ENCODE measurements at regions of chr17 and their contacts with region 1.

Region 1: DNA sequence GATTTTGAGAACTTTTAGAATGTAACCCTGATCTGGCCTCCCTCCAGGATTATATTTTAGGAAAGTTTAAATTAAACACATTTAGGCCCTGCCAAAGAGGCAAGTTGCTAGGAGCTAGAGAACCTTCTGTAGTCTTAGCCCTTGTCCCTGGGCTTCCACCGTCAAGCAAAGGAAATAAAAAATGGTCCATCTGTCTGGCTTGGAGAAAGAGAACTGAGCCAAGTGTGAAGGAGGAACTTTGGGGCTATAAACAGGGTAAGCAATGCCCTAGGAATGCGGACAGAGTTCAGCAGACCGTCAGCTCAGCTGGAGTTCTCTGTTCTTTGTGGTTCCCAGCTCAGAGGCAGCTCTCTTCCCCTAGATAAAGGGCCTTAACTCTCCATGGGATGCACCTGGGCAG is 29.6 kb downstream of the RCVRN start:
- DNase-seq: no peak
- H3K4me3 ChIP-seq: no peak overlapping the region
- H3K27ac ChIP-seq: no peak overlapping the region
- H3K4me1 ChIP-seq: peaks cover 8% of the 10 kb centered on the region
- H3K27me3 ChIP-seq: no peaks in the 10 kb centered on the region
- CTCF ChIP-seq: no peak
- EP300 ChIP-seq: no peak
- POLR2A ChIP-seq: no peak

Region 2: GRCh38 chr17:9772658-9773057 is 102.8 kb before region 1 on chr17:
- intact Hi-C with region 1: loop called in 1 of 4 experiments (anchors 10 kb)
- DNase-seq: no peak
- H3K4me3 ChIP-seq: no peak overlapping the region
- H3K27ac ChIP-seq: no peak overlapping the region
- H3K4me1 ChIP-seq: no peaks in the 10 kb centered on the region
- H3K27me3 ChIP-seq: no peaks in the 10 kb centered on the region
- CTCF ChIP-seq: no peak
- EP300 ChIP-seq: no peak
- POLR2A ChIP-seq: no peak

Region 3: GRCh38 chr17:10033959-10034358 is 158.5 kb after region 1 on chr17:
- intact Hi-C with region 1: no loop called
- DNase-seq: no peak
- H3K4me3 ChIP-seq: no peak overlapping the region
- H3K27ac ChIP-seq: no peak overlapping the region
- H3K4me1 ChIP-seq: peaks cover 3% of the 10 kb centered on the region
- H3K27me3 ChIP-seq: no peaks in the 10 kb centered on the region
- CTCF ChIP-seq: no peak
- EP300 ChIP-seq: no peak
- POLR2A ChIP-seq: no peak

Measured in ovary (tissue), 10 donors.